Ovary (tissue), 10 donors: ENCODE measurements at regions of chr19 and their contacts with region 1.

Region 1: GRCh38 chr19:49817964-49818648 is at the start of gene MED25:
- DNase-seq: peak; percentile 88 to 94 (median 91)
- H3K4me3 ChIP-seq: peak within 1 kb of the TSS; percentile 80
- H3K27ac ChIP-seq: peak within 1 kb of the TSS; percentile 96 to 97
- H3K4me1 ChIP-seq: peaks cover 11% of the 10 kb centered on the region
- H3K27me3 ChIP-seq: no peaks in the 10 kb centered on the region
- CTCF ChIP-seq: peak in 2 of 3 donors; percentile 61 to 79
- EP300 ChIP-seq: no peak
- POLR2A ChIP-seq: peak; percentile 86
- total RNA-seq, gene MED25: 30.3 to 89.9 (median 85.3) TPM

Region 2: GRCh38 chr19:49850473-49851342 is 32.6 kb after region 1 on chr19 and contains the start of gene PTOV1:
- intact Hi-C with region 1: loop called in 2 of 4 experiments (anchors 5 kb)
- DNase-seq: peak; percentile 89 to 95 (median 93)
- H3K4me3 ChIP-seq: peak within 1 kb of the TSS; percentile 83
- H3K27ac ChIP-seq: peak within 1 kb of the TSS; percentile 94 to 97
- H3K4me1 ChIP-seq: peaks cover 5% of the 10 kb centered on the region
- H3K27me3 ChIP-seq: no peaks in the 10 kb centered on the region
- CTCF ChIP-seq: no peak
- EP300 ChIP-seq: no peak
- POLR2A ChIP-seq: peak; percentile 80
- total RNA-seq, gene PTOV1: 108 to 256 (median 206) TPM

Region 3: GRCh38 chr19:49862376-49863253 is 44.5 kb after region 1 on chr19:
- intact Hi-C with region 1: loop called in 1 of 4 experiments (anchors 5 kb)
- DNase-seq: peak; percentile 54 to 89 (median 56)
- H3K4me3 ChIP-seq: no peak overlapping the region
- H3K27ac ChIP-seq: peak overlapping the region; percentile 65 to 68
- H3K4me1 ChIP-seq: peaks cover 17% of the 10 kb centered on the region
- H3K27me3 ChIP-seq: no peaks in the 10 kb centered on the region
- CTCF ChIP-seq: peak in 1 of 3 donors; percentile 10
- EP300 ChIP-seq: no peak
- POLR2A ChIP-seq: no peak

Region 4: GRCh38 chr19:49896863-49897621 is 78.9 kb after region 1 on chr19 and contains the start of gene IL4I1:
- intact Hi-C with region 1: no loop called
- DNase-seq: no peak
- H3K4me3 ChIP-seq: no peak within 1 kb of the TSS
- H3K27ac ChIP-seq: no peak within 1 kb of the TSS
- H3K4me1 ChIP-seq: peaks cover 2% of the 10 kb centered on the region
- H3K27me3 ChIP-seq: no peaks in the 10 kb centered on the region
- CTCF ChIP-seq: no peak
- EP300 ChIP-seq: no peak
- POLR2A ChIP-seq: no peak
- total RNA-seq, gene IL4I1: 0.24 to 4.3 (median 1.3) TPM in 6 of 7 donors, not detected in the other